ENCODE measurements at regions of chr1 and their contacts with region 1.

Region 1: GRCh38 chr1:229227298-229227919 is 43.5 kb upstream of the RAB4A start:
- DNase-seq: peak; percentile 78 to 98 (median 92)

Region 2: DNA sequence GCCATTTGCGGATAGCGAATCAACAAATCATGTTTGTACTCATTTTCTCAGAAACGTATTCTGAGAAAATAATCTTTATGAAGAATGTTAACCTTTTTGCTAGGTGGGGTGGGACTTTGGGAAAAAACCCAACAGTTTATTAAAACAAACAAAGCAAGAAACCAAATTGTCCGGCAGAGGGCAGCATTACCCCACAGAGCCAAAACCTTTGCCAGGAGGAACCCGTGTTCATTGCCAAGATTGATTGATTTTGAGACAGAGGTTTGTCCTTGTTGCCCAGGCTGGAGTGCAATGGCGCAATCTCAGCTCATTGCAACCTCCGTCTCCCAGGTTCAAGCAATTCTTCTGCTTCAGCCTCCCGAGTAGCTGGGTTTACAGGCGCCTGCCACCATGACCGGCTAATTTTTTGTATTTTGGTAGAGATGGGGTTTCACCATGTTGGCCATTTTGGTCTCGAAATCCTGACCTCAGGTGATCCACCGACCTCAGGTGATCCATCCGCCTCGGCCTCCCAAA is 563.0 kb before region 1 on chr1:
- intact Hi-C with region 1: loop called (anchors 1 kb)
- DNase-seq: peak; percentile 32 to 95 (median 80)

Region 3: DNA sequence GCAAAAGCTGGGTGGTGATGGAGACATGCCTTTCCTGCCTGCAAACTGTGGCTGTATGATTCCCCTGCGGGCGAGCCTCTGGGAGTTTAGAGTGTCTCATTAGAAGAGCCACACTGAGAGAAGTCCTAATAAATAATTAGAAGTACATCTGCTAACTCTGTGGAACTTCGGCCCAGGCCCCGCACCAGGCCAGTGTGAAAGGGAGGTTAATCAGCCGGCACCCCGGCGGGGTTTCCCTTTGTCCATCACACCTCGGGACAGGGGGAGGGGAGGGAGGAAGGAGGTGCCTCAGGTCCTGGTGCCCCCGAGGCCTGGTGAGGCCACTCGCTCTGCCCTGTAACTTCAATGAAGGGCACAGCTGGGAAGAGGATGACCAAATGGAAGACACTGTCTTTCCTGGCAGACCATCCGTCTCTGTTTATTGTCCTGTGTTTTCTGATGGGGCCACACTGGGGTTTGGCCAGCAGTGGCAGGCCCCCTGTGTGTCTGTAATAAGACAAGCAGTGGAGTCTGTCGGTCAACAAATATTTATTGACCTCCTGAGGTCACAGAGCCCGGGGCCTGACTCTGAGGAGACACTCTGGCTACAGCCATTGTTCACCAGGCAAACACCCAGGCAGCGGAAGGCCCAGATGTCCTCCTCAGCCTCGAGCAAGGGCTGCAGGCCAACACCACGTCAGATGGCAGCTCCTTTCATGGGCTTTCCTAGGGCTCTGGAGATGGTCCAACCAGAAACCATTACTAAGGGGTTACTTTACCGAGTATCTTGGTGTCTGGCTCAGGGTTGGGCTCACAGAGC is 224.0 kb before region 1 on chr1:
- intact Hi-C with region 1: loop called (anchors 5 kb)
- DNase-seq: peak; percentile 73 to 98 (median 88)

Region 4: GRCh38 chr1:229015806-229016205 is 211.6 kb before region 1 on chr1:
- intact Hi-C with region 1: no loop called
- DNase-seq: peak in 3 of 10 donors; percentile 30 to 79 (median 76)

Region 5: GRCh38 chr1:229156872-229157271 is 70.5 kb before region 1 on chr1:
- intact Hi-C with region 1: loop called (anchors 10 kb)
- DNase-seq: peak in 2 of 10 donors; percentile 17 to 30

Measured in posterior cingulate gyrus (tissue), 11 donors.